CD8-positive, alpha-beta memory T cell (primary cell): ENCODE measurements at regions of chr17 and their contacts with region 1.

Region 1: GRCh38 chr17:7336240-7337175 is at the start of gene ACAP1:
- DNase-seq: peak; percentile 78 to 90 (median 81)
- H3K4me3 ChIP-seq: peak within 1 kb of the TSS; percentile 99
- H3K4me3 Mint-ChIP-seq: peak within 1 kb of the TSS; percentile 88 to 98 (median 93)
- H3K27ac ChIP-seq: peak within 1 kb of the TSS; percentile 74
- H3K27ac Mint-ChIP-seq: peak within 1 kb of the TSS; percentile 89 to 98 (median 97)
- H3K4me1 ChIP-seq: peaks cover 69% of the 10 kb centered on the region
- H3K4me1 Mint-ChIP-seq: peaks cover 47 to 68% (median 66%) of the 10 kb centered on the region in 3 donors
- H3K27me3 ChIP-seq: no peaks in the 10 kb centered on the region
- H3K27me3 Mint-ChIP-seq: no peaks in the 10 kb centered on the region
- total RNA-seq, gene ACAP1: 216 to 225 TPM

Region 2: GRCh38 chr17:7306911-7307686 is 29.4 kb before region 1 on chr17 and contains the start of gene EIF5A:
- CTCF ChIA-PET with region 1: interaction called, 8 read pairs
- POLR2A ChIA-PET with region 1: interaction called, 16 read pairs
- DNase-seq: peak; percentile 100
- H3K4me3 ChIP-seq: peak within 1 kb of the TSS; percentile 62
- H3K4me3 Mint-ChIP-seq: peak within 1 kb of the TSS; percentile 92 to 99 (median 95)
- H3K27ac ChIP-seq: peak within 1 kb of the TSS; percentile 98
- H3K27ac Mint-ChIP-seq: peak within 1 kb of the TSS; percentile 97 to 99 (median 99)
- H3K4me1 ChIP-seq: peaks cover 30% of the 10 kb centered on the region
- H3K4me1 Mint-ChIP-seq: peaks cover 36 to 39% (median 38%) of the 10 kb centered on the region in 3 donors
- H3K27me3 ChIP-seq: no peaks in the 10 kb centered on the region
- H3K27me3 Mint-ChIP-seq: peaks cover 0 to 5% of the 10 kb centered on the region in 2 donors
- total RNA-seq, gene EIF5A: 1,533 to 1,595 TPM

Region 3: GRCh38 chr17:7314719-7315569 is 21.6 kb before region 1 on chr17 and contains the start of gene GPS2:
- CTCF ChIA-PET with region 1: interaction called, 8 read pairs
- POLR2A ChIA-PET with region 1: interaction called, 17 read pairs
- DNase-seq: peak; percentile 88 to 94 (median 90)
- H3K4me3 ChIP-seq: peak within 1 kb of the TSS; percentile 66
- H3K4me3 Mint-ChIP-seq: peak within 1 kb of the TSS; percentile 87 to 96 (median 92)
- H3K27ac ChIP-seq: peak within 1 kb of the TSS; percentile 76
- H3K27ac Mint-ChIP-seq: peak within 1 kb of the TSS; percentile 92 to 97 (median 94)
- H3K4me1 ChIP-seq: peaks cover 49% of the 10 kb centered on the region
- H3K4me1 Mint-ChIP-seq: peaks cover 44 to 58% (median 48%) of the 10 kb centered on the region in 3 donors
- H3K27me3 ChIP-seq: no peaks in the 10 kb centered on the region
- H3K27me3 Mint-ChIP-seq: peaks cover 0 to 8% of the 10 kb centered on the region in 2 donors
- total RNA-seq, gene GPS2: 81.1 to 85.2 TPM

Region 4: GRCh38 chr17:7825206-7825990 is 488.9 kb after region 1 on chr17:
- CTCF ChIA-PET with region 1: no interaction called
- POLR2A ChIA-PET with region 1: no interaction called
- DNase-seq: no peak
- H3K4me3 ChIP-seq: no peak overlapping the region
- H3K4me3 Mint-ChIP-seq: no peak overlapping the region
- H3K27ac ChIP-seq: no peak overlapping the region
- H3K27ac Mint-ChIP-seq: no peak overlapping the region
- H3K4me1 ChIP-seq: no peaks in the 10 kb centered on the region
- H3K4me1 Mint-ChIP-seq: no peaks in the 10 kb centered on the region
- H3K27me3 ChIP-seq: peaks cover 2% of the 10 kb centered on the region
- H3K27me3 Mint-ChIP-seq: peaks cover 3 to 10% of the 10 kb centered on the region in 2 donors